SK-N-SH (cell line): ENCODE measurements at regions of chr1 and their contacts with region 1.

Region 1: GRCh38 chr1:8848663-8849386 is 29.7 kb downstream of the ENO1 start:
- DNase-seq: peak; percentile 97
- H3K4me3 ChIP-seq: peak overlapping the region in 1 of 2 experiments; percentile 44; a peak in 1 of 4 replicates
- H3K27ac ChIP-seq: peak overlapping the region in 1 of 2 experiments; percentile 41; a peak in 2 of 4 replicates
- H3K4me1 ChIP-seq: peaks cover 5 to 28% of the 10 kb centered on the region in 2 experiments; a peak in 1 of 4 replicates
- H3K27me3 ChIP-seq: no peaks in the 10 kb centered on the region
- CTCF ChIP-seq: peak; percentile 78
- EP300 ChIP-seq: peak in 1 of 2 experiments; percentile 33; a peak in 1 of 4 replicates
- RAD21 ChIP-seq: peak; percentile 92

Region 2: GRCh38 chr1:8560611-8561544 is 287.9 kb before region 1 on chr1:
- CTCF ChIA-PET with region 1: interaction called, 52 read pairs
- POLR2A ChIA-PET with region 1: no interaction called
- DNase-seq: peak; percentile 38
- H3K4me3 ChIP-seq: no peak overlapping the region; a peak in 1 of 4 replicates
- H3K27ac ChIP-seq: peak overlapping the region in 1 of 2 experiments; percentile 16; a peak in 1 of 4 replicates
- H3K4me1 ChIP-seq: peaks cover 11 to 38% of the 10 kb centered on the region in 2 experiments
- H3K27me3 ChIP-seq: no peaks in the 10 kb centered on the region
- CTCF ChIP-seq: peak; percentile 90
- EP300 ChIP-seq: no peak
- RAD21 ChIP-seq: peak; percentile 92

Region 3: DNA sequence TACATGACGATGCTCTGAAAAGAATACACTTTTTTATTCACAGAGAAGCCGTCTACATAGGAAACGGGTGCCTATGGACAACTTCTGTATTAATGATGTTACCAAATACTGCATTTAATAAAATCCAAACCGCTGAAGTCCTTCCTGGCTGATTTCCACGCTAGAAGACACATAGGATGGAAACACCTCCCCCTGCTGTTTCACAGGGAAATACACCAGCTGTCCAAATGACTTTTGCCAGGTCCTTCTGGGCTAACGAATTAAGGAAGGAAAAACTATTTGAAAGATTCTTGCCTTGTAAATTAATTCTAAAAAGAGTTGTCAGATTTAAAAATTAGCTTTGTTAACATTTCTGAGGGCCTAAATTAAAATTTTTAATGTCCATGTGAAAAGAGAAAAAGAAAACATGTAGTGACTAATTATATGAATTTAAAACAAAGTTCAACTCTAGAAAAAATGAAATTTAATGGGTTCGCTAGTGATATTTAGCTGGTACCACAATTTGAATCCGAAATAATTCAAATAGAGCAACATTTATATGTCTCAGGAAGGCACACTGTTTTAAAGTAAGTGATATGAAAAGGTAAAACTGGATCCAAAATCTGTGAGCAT is 177.4 kb before region 1 on chr1:
- CTCF ChIA-PET with region 1: interaction called, 15 read pairs
- POLR2A ChIA-PET with region 1: interaction called, 3 read pairs
- DNase-seq: peak; percentile 60
- H3K4me3 ChIP-seq: no peak overlapping the region
- H3K27ac ChIP-seq: no peak overlapping the region; a peak in 1 of 4 replicates
- H3K4me1 ChIP-seq: peaks cover 30 to 52% of the 10 kb centered on the region in 2 experiments
- H3K27me3 ChIP-seq: no peaks in the 10 kb centered on the region
- CTCF ChIP-seq: peak; percentile 81
- EP300 ChIP-seq: no peak
- RAD21 ChIP-seq: peak; percentile 84

Region 4: GRCh38 chr1:8718850-8719361 is 129.9 kb before region 1 on chr1:
- CTCF ChIA-PET with region 1: interaction called, 75 read pairs
- POLR2A ChIA-PET with region 1: interaction called, 4 read pairs
- DNase-seq: peak; percentile 45
- H3K4me3 ChIP-seq: no peak overlapping the region
- H3K27ac ChIP-seq: peak overlapping the region in 1 of 2 experiments; percentile 84; a peak in 2 of 4 replicates
- H3K4me1 ChIP-seq: peaks cover 8 to 15% of the 10 kb centered on the region in 2 experiments; a peak in 3 of 4 replicates
- H3K27me3 ChIP-seq: no peaks in the 10 kb centered on the region
- CTCF ChIP-seq: peak; percentile 43
- EP300 ChIP-seq: peak in 1 of 2 experiments; percentile 62; a peak in 2 of 4 replicates
- RAD21 ChIP-seq: peak; percentile 64

Region 5: GRCh38 chr1:8817406-8818324 is 31.2 kb before region 1 on chr1 and contains the start of gene RERE:
- CTCF ChIA-PET with region 1: interaction called, 23 read pairs
- POLR2A ChIA-PET with region 1: interaction called, 12 read pairs
- DNase-seq: peak; percentile 100
- H3K4me3 ChIP-seq: peak within 1 kb of the TSS; percentile 82 to 90
- H3K27ac ChIP-seq: peak within 1 kb of the TSS; percentile 88 to 95
- H3K4me1 ChIP-seq: peaks cover 17 to 23% of the 10 kb centered on the region in 2 experiments; a peak in 3 of 4 replicates
- H3K27me3 ChIP-seq: no peaks in the 10 kb centered on the region
- CTCF ChIP-seq: no peak
- EP300 ChIP-seq: no peak
- RAD21 ChIP-seq: no peak
- polyA plus RNA-seq, gene RERE: 4.1 and 8.1 TPM in 2 replicates

Region 6: GRCh38 chr1:8878448-8879347 is 29.9 kb after region 1 on chr1 and contains the start of gene ENO1:
- CTCF ChIA-PET with region 1: interaction called, 12 read pairs
- POLR2A ChIA-PET with region 1: interaction called, 10 read pairs
- DNase-seq: peak; percentile 100
- H3K4me3 ChIP-seq: peak within 1 kb of the TSS; percentile 78 to 89
- H3K27ac ChIP-seq: peak within 1 kb of the TSS; percentile 94 to 97
- H3K4me1 ChIP-seq: peaks cover 31 to 42% of the 10 kb centered on the region in 2 experiments
- H3K27me3 ChIP-seq: no peaks in the 10 kb centered on the region
- CTCF ChIP-seq: no peak
- EP300 ChIP-seq: no peak
- RAD21 ChIP-seq: no peak
- polyA plus RNA-seq, gene ENO1: 1,578 and 1,599 TPM in 2 replicates

Region 7: DNA sequence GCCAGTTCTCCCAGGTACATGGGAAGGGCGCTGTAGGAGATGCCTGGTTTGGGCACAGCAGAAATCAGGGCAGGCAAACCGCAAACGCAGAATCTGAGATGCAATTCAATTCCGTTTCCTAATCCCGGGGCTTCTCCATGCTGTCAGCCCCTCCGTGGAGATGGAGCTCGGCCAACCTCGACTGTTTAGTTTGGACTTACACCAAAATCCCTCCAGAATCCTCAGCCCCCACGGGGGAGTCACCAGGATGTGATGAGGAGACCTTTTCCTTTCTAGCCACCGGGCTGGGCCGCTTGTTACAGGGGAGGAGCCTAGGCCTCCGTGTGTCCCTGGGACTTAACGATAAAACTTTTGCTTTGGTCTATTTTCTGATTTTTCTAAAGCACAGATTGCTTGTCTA is 169.5 kb after region 1 on chr1:
- CTCF ChIA-PET with region 1: no interaction called
- POLR2A ChIA-PET with region 1: no interaction called
- DNase-seq: no peak
- H3K4me3 ChIP-seq: no peak overlapping the region
- H3K27ac ChIP-seq: no peak overlapping the region
- H3K4me1 ChIP-seq: no peaks in the 10 kb centered on the region
- H3K27me3 ChIP-seq: no peaks in the 10 kb centered on the region
- CTCF ChIP-seq: no peak
- EP300 ChIP-seq: no peak
- RAD21 ChIP-seq: no peak